Endothelial cell of umbilical vein (primary cell): ENCODE measurements at regions of chr3 and their contacts with region 1.

Region 1: GRCh38 chr3:11379233-11379823 is 107.1 kb downstream of the ATG7 start:
- DNase-seq: peak; percentile 90
- H3K4me3 ChIP-seq: peak overlapping the region in 2 of 3 experiments; percentile 24 to 43
- H3K27ac ChIP-seq: peak overlapping the region; percentile 98
- H3K4me1 ChIP-seq: peaks cover 21% of the 10 kb centered on the region
- H3K27me3 ChIP-seq: no peaks in the 10 kb centered on the region
- CTCF ChIP-seq: peak; percentile 28 to 43
- POLR2A ChIP-seq: no peak

Region 2: DNA sequence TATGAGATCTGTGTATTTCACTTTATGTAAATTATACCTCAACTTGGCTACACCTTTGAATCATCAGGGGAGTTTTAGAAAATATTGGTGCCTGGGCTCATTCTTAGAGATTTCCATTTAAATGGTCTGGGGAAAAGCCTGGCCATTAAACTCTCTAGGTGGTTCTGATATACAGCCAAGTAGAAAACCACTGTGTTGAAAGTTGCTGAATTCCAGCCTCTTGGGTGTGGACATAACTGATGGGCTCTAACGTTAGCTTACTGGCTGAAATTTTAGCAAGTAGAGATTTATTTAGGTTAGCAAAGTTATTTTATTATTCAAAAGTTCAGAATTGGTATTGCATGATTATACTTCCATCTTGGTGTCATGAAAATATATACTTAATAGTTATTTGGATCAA is 23.1 kb before region 1 on chr3:
- CTCF ChIA-PET with region 1: no interaction called
- POLR2A ChIA-PET with region 1: no interaction called
- dilution Hi-C with region 1: no loop called
- intact Hi-C with region 1: no loop called
- DNase-seq: no peak
- H3K4me3 ChIP-seq: no peak overlapping the region
- H3K27ac ChIP-seq: no peak overlapping the region
- H3K4me1 ChIP-seq: no peaks in the 10 kb centered on the region
- H3K27me3 ChIP-seq: no peaks in the 10 kb centered on the region
- CTCF ChIP-seq: no peak
- POLR2A ChIP-seq: no peak

Region 3: GRCh38 chr3:11400213-11400612 is 20.9 kb after region 1 on chr3:
- CTCF ChIA-PET with region 1: no interaction called
- POLR2A ChIA-PET with region 1: no interaction called
- dilution Hi-C with region 1: no loop called
- intact Hi-C with region 1: no loop called
- DNase-seq: no peak
- H3K4me3 ChIP-seq: no peak overlapping the region
- H3K27ac ChIP-seq: no peak overlapping the region
- H3K4me1 ChIP-seq: no peaks in the 10 kb centered on the region
- H3K27me3 ChIP-seq: no peaks in the 10 kb centered on the region
- CTCF ChIP-seq: no peak
- POLR2A ChIP-seq: no peak

Region 4: DNA sequence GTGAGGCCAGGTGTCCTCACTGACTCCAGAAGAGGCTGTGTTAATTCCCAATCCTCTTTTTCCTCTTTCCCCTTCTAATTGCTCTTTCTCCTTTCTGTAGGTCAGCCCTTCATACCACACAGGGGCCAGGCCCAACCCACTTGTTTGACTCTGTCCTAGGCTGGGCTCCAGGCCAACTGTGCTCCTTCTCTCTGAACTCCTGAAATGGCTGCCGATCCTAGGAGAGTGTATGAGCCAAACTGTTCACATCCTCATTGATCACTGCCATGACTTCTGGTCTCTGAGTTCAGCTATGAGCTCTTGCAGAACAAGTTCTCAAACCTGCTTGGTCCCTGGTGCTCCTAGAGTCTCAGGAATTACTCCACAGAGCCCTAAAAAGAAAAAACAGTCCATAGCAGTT is 119.3 kb after region 1 on chr3:
- CTCF ChIA-PET with region 1: interaction called, 5 read pairs
- POLR2A ChIA-PET with region 1: no interaction called
- dilution Hi-C with region 1: no loop called
- intact Hi-C with region 1: loop called (anchors 1 kb)
- DNase-seq: peak; percentile 78
- H3K4me3 ChIP-seq: no peak overlapping the region
- H3K27ac ChIP-seq: peak overlapping the region; percentile 93
- H3K4me1 ChIP-seq: peaks cover 35% of the 10 kb centered on the region
- H3K27me3 ChIP-seq: no peaks in the 10 kb centered on the region
- CTCF ChIP-seq: no peak
- POLR2A ChIP-seq: no peak

Region 5: GRCh38 chr3:11568503-11569155 is 189.3 kb after region 1 on chr3:
- CTCF ChIA-PET with region 1: interaction called, 21 read pairs
- POLR2A ChIA-PET with region 1: no interaction called
- dilution Hi-C with region 1: no loop called
- intact Hi-C with region 1: loop called (anchors 1 kb)
- DNase-seq: peak; percentile 97
- H3K4me3 ChIP-seq: peak overlapping the region in 2 of 3 experiments; percentile 3 to 10
- H3K27ac ChIP-seq: peak overlapping the region; percentile 97
- H3K4me1 ChIP-seq: peaks cover 53% of the 10 kb centered on the region
- H3K27me3 ChIP-seq: no peaks in the 10 kb centered on the region
- CTCF ChIP-seq: no peak
- POLR2A ChIP-seq: peak; percentile 74

Region 6: DNA sequence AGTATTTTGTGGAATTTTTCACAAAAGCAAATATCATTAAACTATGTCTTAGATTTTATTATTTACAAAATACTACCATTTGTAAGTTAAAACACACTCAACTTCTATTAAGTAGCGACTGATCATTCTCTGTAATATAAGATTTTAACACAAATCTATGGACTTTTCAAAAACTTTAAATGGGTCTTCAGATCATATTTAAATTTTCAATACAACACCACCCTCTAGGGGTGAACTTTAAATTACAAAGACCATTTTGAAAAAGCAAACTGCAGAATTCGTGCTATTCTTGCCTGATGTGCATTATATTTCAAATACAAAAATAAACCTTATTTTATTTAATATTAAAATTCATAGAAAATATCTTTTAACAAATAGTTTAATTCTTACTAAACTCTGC is 272.6 kb after region 1 on chr3:
- CTCF ChIA-PET with region 1: interaction called, 189 read pairs
- POLR2A ChIA-PET with region 1: interaction called, 3 read pairs
- dilution Hi-C with region 1: no loop called
- intact Hi-C with region 1: loop called (anchors 1 kb)
- DNase-seq: peak; percentile 62
- H3K4me3 ChIP-seq: no peak overlapping the region
- H3K27ac ChIP-seq: no peak overlapping the region
- H3K4me1 ChIP-seq: peaks cover 3% of the 10 kb centered on the region
- H3K27me3 ChIP-seq: no peaks in the 10 kb centered on the region
- CTCF ChIP-seq: peak in 1 of 2 donors; percentile 16
- POLR2A ChIP-seq: no peak

Region 7: GRCh38 chr3:11803977-11804892 is 424.9 kb after region 1 on chr3:
- CTCF ChIA-PET with region 1: interaction called, 48 read pairs
- POLR2A ChIA-PET with region 1: no interaction called
- dilution Hi-C with region 1: no loop called
- intact Hi-C with region 1: loop called (anchors 1 kb)
- DNase-seq: peak; percentile 53
- H3K4me3 ChIP-seq: no peak overlapping the region
- H3K27ac ChIP-seq: no peak overlapping the region
- H3K4me1 ChIP-seq: no peaks in the 10 kb centered on the region
- H3K27me3 ChIP-seq: no peaks in the 10 kb centered on the region
- CTCF ChIP-seq: peak; percentile 68 to 70
- POLR2A ChIP-seq: no peak

Region 8: GRCh38 chr3:12484198-12484974 is 1105.1 kb after region 1 on chr3 and contains the start of gene TSEN2:
- CTCF ChIA-PET with region 1: no interaction called
- POLR2A ChIA-PET with region 1: no interaction called
- dilution Hi-C with region 1: no loop called
- intact Hi-C with region 1: loop called (anchors 5 kb)
- DNase-seq: peak; percentile 96
- H3K4me3 ChIP-seq: peak within 1 kb of the TSS; percentile 51 to 59 (median 58)
- H3K27ac ChIP-seq: no peak within 1 kb of the TSS
- H3K4me1 ChIP-seq: peaks cover 23% of the 10 kb centered on the region
- H3K27me3 ChIP-seq: no peaks in the 10 kb centered on the region
- CTCF ChIP-seq: no peak
- POLR2A ChIP-seq: peak; percentile 86
- total RNA-seq, gene TSEN2: 12.1 and 12.6 TPM in 2 replicates